IMR-90 (cell line): ENCODE measurements at regions of chr17 and their contacts with region 1.

Region 1: GRCh38 chr17:60874772-60875171 is 197.1 kb downstream of the BCAS3 start:
- DNase-seq: no peak
- ATAC-seq: no peak
- H3K4me3 ChIP-seq: no peak overlapping the region
- H3K27ac ChIP-seq: no peak overlapping the region
- H3K4me1 ChIP-seq: no peaks in the 10 kb centered on the region
- H3K27me3 ChIP-seq: no peaks in the 10 kb centered on the region
- CTCF ChIP-seq: no peak
- POLR2A ChIP-seq: no peak
- RAD21 ChIP-seq: no peak

Region 2: DNA sequence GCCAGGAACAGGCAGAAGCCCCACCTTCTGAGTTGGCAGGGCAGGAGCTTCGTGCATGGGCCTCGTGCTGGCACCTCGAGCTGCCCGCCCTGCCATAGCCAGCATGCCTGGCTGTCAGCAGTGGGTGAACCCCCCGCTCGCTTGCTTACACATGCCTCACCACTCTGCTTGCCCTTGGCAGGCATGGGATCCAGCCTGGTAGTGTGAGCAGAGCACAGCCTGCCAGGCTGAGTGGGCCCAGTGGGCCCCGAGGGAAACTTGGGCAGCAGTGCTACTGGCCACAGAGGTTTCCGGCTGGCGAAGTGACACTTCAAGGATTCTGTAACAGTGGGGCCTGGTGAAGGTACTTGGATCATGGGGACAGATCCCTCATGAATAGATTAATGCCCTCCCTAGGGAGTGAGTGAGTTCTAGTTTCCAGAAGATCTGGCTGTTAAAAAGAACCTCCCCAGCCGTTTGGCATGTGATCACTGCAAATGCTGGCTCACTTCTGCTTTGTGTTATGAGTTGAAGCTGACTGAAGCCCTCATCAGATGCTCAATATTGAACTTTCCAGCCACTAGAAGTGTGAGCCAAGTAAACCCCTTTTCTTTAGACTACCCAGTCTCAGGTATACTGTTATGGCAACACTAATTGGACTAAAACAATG is 82.4 kb before region 1 on chr17:
- CTCF ChIA-PET with region 1: no interaction called
- POLR2A ChIA-PET with region 1: no interaction called
- dilution Hi-C with region 1: no loop called
- in situ Hi-C with region 1: no loop called
- intact Hi-C with region 1: loop called (anchors 5 kb)
- DNase-seq: no peak
- ATAC-seq: no peak
- H3K4me3 ChIP-seq: no peak overlapping the region
- H3K27ac ChIP-seq: no peak overlapping the region
- H3K4me1 ChIP-seq: no peaks in the 10 kb centered on the region
- H3K27me3 ChIP-seq: no peaks in the 10 kb centered on the region
- CTCF ChIP-seq: no peak
- POLR2A ChIP-seq: no peak
- RAD21 ChIP-seq: no peak